ENCODE measurements at regions of chrX and their contacts with region 1.

Region 1: GRCh38 chrX:68894513-68895340 is 65.9 kb downstream of the EFNB1 start:
- DNase-seq: peak; percentile 33
- H3K4me3 ChIP-seq: no peak overlapping the region
- H3K27ac ChIP-seq: peak overlapping the region; percentile 37
- H3K4me1 ChIP-seq: peaks cover 18% of the 10 kb centered on the region
- H3K27me3 ChIP-seq: no peaks in the 10 kb centered on the region
- CTCF ChIP-seq: no peak

Region 2: DNA sequence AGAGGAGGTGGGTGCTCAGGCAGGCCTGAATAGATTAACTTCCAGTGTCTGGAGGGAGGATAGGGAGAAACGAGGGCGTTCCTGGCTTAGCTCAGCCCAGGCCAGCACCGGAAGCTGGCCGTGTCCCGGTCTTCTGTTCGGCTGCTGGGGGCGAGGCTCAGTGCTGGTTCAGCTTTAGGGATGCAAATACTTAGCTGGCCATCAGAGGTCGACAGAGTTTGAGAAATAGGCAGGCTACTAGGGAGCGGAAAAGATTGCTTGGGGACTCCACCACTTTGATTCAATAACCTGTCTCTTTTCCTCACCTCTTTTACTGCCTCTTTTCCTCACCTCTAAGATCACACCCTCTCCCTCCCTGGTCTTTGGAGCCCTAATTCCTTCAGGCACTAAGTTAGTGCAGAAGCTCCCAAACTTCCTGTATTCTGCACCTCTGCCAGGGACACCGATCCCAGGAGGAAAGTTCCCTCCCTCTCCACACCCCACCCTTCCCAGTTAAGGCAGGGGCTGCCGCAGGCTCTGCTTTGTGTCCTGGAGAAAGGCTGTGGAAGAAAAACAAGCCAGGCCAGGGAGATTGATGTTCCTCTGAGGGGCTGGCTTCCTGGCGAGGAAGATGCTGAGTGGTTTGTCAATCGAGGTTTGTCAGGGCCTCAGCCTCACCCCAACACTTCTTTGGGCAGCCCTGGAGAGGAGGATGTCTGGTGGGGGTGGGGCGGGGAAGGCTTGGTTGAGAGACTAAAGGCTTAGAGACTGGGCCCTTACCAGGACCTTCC is 71.9 kb before region 1 on chrX:
- CTCF ChIA-PET with region 1: no interaction called
- dilution Hi-C with region 1: no loop called
- in situ Hi-C with region 1: no loop called
- intact Hi-C with region 1: no loop called
- DNase-seq: no peak
- H3K4me3 ChIP-seq: no peak overlapping the region
- H3K27ac ChIP-seq: no peak overlapping the region
- H3K4me1 ChIP-seq: peaks cover 4% of the 10 kb centered on the region
- H3K27me3 ChIP-seq: no peaks in the 10 kb centered on the region
- CTCF ChIP-seq: peak; percentile 71 to 72

Region 3: GRCh38 chrX:68842781-68843581 is 51.7 kb before region 1 on chrX:
- CTCF ChIA-PET with region 1: no interaction called
- dilution Hi-C with region 1: no loop called
- in situ Hi-C with region 1: no loop called
- intact Hi-C with region 1: loop called (anchors 2 kb)
- DNase-seq: peak; percentile 60
- H3K4me3 ChIP-seq: no peak overlapping the region
- H3K27ac ChIP-seq: peak overlapping the region; percentile 50
- H3K4me1 ChIP-seq: peaks cover 57% of the 10 kb centered on the region
- H3K27me3 ChIP-seq: no peaks in the 10 kb centered on the region
- CTCF ChIP-seq: peak; percentile 12 to 21

Region 4: GRCh38 chrX:68950937-68951336 is 56.2 kb after region 1 on chrX:
- CTCF ChIA-PET with region 1: no interaction called
- dilution Hi-C with region 1: no loop called
- in situ Hi-C with region 1: no loop called
- intact Hi-C with region 1: no loop called
- DNase-seq: no peak
- H3K4me3 ChIP-seq: no peak overlapping the region
- H3K27ac ChIP-seq: no peak overlapping the region
- H3K4me1 ChIP-seq: no peaks in the 10 kb centered on the region
- H3K27me3 ChIP-seq: no peaks in the 10 kb centered on the region
- CTCF ChIP-seq: no peak